ENCODE measurements at regions of chr9 and their contacts with region 1.

Region 1: DNA sequence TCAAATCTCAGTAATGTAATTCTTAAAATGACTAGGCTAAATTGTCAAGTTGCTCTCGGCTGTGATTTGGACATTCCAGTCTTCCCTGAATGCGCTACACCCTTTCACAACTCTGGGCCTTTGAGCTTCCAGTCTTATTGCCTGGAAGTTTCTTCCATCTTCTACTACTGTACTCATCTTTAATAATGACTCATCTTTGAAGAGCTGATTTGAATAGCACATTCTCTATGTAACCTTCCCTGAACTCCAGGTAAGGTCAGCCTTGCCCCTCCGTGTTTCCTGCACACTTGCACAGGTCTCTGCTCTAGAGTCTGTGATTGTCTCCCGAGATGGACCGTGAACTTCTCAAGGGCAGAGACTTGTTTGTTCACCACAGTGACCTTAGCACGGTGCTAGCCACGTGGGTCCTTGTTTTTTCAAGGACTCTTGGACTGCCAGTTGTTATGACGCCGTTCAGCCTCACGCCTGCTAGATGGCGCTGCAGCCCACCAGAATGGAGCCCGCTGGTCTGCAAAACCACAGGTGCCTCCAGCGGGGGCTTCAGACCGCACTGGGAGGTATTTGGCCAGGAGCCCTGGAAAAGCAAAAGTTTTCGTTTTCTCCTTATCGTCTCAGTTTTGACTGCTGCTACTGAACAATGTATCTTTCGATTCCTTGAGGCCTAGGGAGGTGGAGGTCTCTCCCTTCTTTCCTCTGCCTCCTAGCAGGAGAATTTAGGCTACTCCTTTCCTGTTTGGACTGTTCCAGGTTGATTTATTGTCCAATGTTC is 44.4 kb downstream of the SEC61B start:
- DNase-seq: peak; percentile 64 to 83 (median 78)
- H3K4me3 ChIP-seq: peak overlapping the region in 26 of 59 donors; percentile 0 to 45 (median 24)
- H3K27ac ChIP-seq: no peak overlapping the region
- H3K27me3 ChIP-seq: no peaks in the 10 kb centered on the region
- CTCF ChIP-seq: peak; percentile 62 to 95 (median 88)

Region 2: DNA sequence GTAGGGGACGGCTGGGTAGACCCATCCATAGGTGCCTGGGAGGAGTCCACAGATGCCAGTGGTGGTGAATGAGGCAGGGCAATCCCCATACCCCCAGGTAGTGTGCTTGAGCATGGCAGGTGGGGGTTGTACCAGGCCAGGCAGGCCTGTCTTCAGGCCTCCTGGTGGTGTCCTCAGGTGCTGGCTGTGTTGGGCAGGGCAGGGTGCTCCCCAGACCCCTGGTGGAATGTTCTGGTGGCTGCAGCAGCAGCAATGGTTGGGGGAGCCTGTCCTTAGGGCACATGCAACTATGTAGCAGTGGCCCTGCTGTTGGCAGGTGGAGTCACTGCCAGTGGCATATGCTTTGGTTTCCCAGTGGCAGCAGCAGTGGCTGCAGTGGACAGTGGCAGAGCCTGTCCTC is 54.7 kb before region 1 on chr9:
- intact Hi-C with region 1: no loop called
- DNase-seq: no peak
- H3K4me3 ChIP-seq: no peak overlapping the region
- H3K27ac ChIP-seq: no peak overlapping the region
- H3K27me3 ChIP-seq: no peaks in the 10 kb centered on the region
- CTCF ChIP-seq: no peak

Region 3: GRCh38 chr9:100011062-100011681 is 744.7 kb after region 1 on chr9:
- intact Hi-C with region 1: loop called (anchors 10 kb)
- DNase-seq: no peak
- H3K4me3 ChIP-seq: no peak overlapping the region
- H3K27ac ChIP-seq: no peak overlapping the region
- H3K27me3 ChIP-seq: no peaks in the 10 kb centered on the region
- CTCF ChIP-seq: peak in 54 of 56 donors; percentile 21 to 62 (median 40)

Region 4: GRCh38 chr9:100322954-100323536 is 1056.6 kb after region 1 on chr9:
- intact Hi-C with region 1: loop called in 1 of 2 experiments (anchors 5 kb)
- DNase-seq: peak in 3 of 10 donors; percentile 14 to 56 (median 31)
- H3K4me3 ChIP-seq: no peak overlapping the region
- H3K27ac ChIP-seq: no peak overlapping the region
- H3K27me3 ChIP-seq: no peaks in the 10 kb centered on the region
- CTCF ChIP-seq: peak; percentile 47 to 88 (median 72)